ENCODE measurements at regions of chr2 and their contacts with region 1.

Region 1: GRCh38 chr2:165203689-165204559 is at the start of gene SCN3A:
- DNase-seq: peak; percentile 7
- H3K4me3 ChIP-seq: no peak within 1 kb of the TSS
- H3K27me3 ChIP-seq: no peaks in the 10 kb centered on the region
- CTCF ChIP-seq: peak; percentile 78
- polyA plus RNA-seq, gene SCN3A: 0.78 and 1.2 TPM in 2 replicates

Region 2: GRCh38 chr2:164824865-164825264 is 379.1 kb before region 1 on chr2:
- CTCF ChIA-PET with region 1: no interaction called
- POLR2A ChIA-PET with region 1: no interaction called
- DNase-seq: no peak
- H3K4me3 ChIP-seq: no peak overlapping the region
- H3K27me3 ChIP-seq: no peaks in the 10 kb centered on the region
- CTCF ChIP-seq: no peak

Region 3: GRCh38 chr2:164992818-164993217 is 211.1 kb before region 1 on chr2:
- CTCF ChIA-PET with region 1: interaction called, 18 read pairs
- POLR2A ChIA-PET with region 1: no interaction called
- DNase-seq: peak; percentile 72
- H3K4me3 ChIP-seq: no peak overlapping the region
- H3K27me3 ChIP-seq: no peaks in the 10 kb centered on the region
- CTCF ChIP-seq: peak; percentile 39; the same call in 1 of the 2 replicates

Region 4: GRCh38 chr2:165015052-165015642 is 188.8 kb before region 1 on chr2:
- CTCF ChIA-PET with region 1: interaction called, 28 read pairs
- POLR2A ChIA-PET with region 1: interaction called, 5 read pairs
- DNase-seq: no peak
- H3K4me3 ChIP-seq: no peak overlapping the region
- H3K27me3 ChIP-seq: peaks cover 5% of the 10 kb centered on the region
- CTCF ChIP-seq: peak; percentile 93

Region 5: GRCh38 chr2:165064743-165065142 is 139.2 kb before region 1 on chr2:
- CTCF ChIA-PET with region 1: no interaction called
- POLR2A ChIA-PET with region 1: no interaction called
- DNase-seq: no peak
- H3K4me3 ChIP-seq: no peak overlapping the region
- H3K27me3 ChIP-seq: peaks cover 2% of the 10 kb centered on the region; the same call in 1 of the 2 replicates
- CTCF ChIP-seq: no peak

Region 6: DNA sequence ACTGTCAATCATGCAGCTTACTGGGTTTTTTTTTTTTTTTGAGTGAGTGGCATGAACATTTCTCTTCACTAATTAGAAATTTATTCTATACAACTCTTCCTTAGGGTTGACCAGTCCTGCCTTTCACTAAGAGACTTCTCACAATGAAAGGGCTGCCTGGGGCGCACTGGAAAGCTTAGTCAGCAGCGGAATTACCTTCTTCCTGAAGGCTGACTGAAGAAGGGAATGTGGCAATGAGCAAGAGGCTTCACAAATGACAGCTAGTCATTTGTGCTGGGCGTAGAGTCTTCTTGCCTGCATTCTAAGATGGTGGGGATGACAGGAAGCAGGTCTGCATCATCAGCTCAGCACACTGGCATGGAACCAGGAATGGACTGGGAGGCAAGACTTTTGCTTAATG is 15.6 kb after region 1 on chr2:
- CTCF ChIA-PET with region 1: interaction called, 10 read pairs
- POLR2A ChIA-PET with region 1: no interaction called
- DNase-seq: no peak
- H3K4me3 ChIP-seq: no peak overlapping the region
- H3K27me3 ChIP-seq: no peaks in the 10 kb centered on the region; the same call in 1 of the 2 replicates
- CTCF ChIP-seq: no peak